A549 (cell line): ENCODE measurements at regions of chr7 and their contacts with region 1.

Region 1: DNA sequence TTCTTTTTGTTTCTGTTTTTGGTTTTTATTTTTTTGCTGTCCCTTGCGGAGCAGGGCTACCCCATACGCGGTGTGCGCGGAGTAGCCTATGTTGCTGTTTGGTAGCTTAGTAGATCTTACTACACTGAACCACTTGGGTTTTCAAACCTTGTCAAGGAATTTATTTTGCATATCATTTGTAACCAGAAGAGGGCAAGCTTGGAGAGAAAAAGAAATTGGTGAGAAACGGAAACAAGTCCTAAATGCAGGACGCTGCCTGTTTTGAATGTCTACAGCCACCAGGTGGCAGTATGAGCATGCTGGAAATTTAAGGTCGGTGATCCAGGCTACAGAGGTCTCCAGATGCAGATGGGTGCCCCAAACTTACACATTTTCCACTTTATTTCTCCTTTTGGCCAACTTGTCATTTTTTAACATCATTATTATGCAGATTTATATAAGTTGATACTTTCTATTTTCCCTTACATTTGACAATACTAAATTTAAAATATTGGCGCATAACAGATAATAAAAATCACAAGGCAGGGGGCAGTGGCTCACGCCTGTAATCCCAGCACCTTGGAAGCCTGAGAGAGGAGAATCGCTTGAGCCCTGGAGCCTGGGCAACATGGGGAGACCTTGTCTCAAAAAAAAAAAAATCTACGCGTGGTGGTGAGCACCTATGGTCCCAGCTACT is 15.3 kb upstream of the TRA2A start:
- DNase-seq: peak; percentile 86 to 93
- ATAC-seq: peak; percentile 92 to 94
- H3K4me3 ChIP-seq: no peak overlapping the region
- H3K27ac ChIP-seq: 0 out of 6 replicates have a peak overlapping the region, but pooled peaks of 1 of the 2 experiments have one; percentile 13
- H3K4me1 ChIP-seq: no peaks in the 10 kb centered on the region
- CTCF ChIP-seq: peak; percentile 99
- EP300 ChIP-seq: no peak
- POLR2A ChIP-seq: no peak
- RAD21 ChIP-seq: peak; percentile 92

Region 2: GRCh38 chr7:23261843-23262452 is 285.1 kb before region 1 on chr7:
- CTCF ChIA-PET with region 1: interaction called, 21 read pairs
- POLR2A ChIA-PET with region 1: no interaction called
- DNase-seq: peak; percentile 76 to 90
- ATAC-seq: peak; percentile 98 to 99
- H3K4me3 ChIP-seq: no peak overlapping the region
- H3K27ac ChIP-seq: no peak overlapping the region
- H3K4me1 ChIP-seq: no peaks in the 10 kb centered on the region
- CTCF ChIP-seq: peak; percentile 90
- EP300 ChIP-seq: no peak
- POLR2A ChIP-seq: no peak
- RAD21 ChIP-seq: peak; percentile 80 to 89

Region 3: DNA sequence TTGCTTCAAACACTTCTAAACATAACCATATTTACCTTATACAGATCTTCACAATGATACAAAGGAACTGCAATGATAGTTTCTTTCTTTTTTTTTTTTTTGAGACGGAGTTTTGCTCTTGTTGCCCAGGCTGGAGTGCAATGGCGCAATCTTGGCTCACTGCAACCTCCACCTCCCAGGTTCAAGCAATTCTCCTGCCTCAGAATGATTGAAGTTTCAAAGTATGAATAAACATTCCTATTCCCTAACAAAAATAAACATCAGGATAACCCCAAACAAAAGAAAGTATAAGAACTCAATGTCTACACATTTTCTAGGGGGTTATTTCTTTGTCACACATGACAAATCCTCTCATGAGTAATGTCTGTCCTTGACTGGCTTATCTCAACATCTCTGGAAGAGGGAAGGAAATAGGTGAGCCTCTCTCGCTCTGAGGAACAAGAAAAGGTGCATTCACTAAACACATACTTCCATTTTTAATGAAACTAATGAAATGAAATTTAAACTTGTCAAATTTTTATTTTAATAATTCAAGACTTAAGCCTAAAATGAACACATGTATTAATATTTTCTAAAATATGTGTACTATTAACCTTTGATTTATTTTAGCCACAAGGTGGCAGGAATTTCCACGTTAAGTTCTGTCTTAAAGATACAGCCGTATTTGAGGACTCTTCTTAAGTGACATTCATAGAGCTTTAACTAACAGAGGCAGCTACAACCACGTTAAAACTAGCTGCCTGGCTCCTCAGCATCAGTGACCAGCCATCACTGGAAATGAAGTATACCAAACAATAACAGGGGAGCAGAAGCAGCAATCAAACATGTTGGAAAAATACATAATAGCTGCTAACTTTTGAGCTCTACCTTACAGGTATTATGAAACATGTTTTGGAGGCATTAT is 189.6 kb before region 1 on chr7:
- CTCF ChIA-PET with region 1: interaction called, 18 read pairs
- POLR2A ChIA-PET with region 1: no interaction called
- DNase-seq: peak; percentile 86 to 87
- ATAC-seq: peak; percentile 91 to 96
- H3K4me3 ChIP-seq: no peak overlapping the region
- H3K27ac ChIP-seq: peak overlapping the region; percentile 62
- H3K4me1 ChIP-seq: peaks cover 37% of the 10 kb centered on the region
- CTCF ChIP-seq: peak; percentile 78
- EP300 ChIP-seq: peak; percentile 57 to 67; a peak in 3 of 5 replicates
- POLR2A ChIP-seq: no peak
- RAD21 ChIP-seq: peak; percentile 62 to 85

Region 4: DNA sequence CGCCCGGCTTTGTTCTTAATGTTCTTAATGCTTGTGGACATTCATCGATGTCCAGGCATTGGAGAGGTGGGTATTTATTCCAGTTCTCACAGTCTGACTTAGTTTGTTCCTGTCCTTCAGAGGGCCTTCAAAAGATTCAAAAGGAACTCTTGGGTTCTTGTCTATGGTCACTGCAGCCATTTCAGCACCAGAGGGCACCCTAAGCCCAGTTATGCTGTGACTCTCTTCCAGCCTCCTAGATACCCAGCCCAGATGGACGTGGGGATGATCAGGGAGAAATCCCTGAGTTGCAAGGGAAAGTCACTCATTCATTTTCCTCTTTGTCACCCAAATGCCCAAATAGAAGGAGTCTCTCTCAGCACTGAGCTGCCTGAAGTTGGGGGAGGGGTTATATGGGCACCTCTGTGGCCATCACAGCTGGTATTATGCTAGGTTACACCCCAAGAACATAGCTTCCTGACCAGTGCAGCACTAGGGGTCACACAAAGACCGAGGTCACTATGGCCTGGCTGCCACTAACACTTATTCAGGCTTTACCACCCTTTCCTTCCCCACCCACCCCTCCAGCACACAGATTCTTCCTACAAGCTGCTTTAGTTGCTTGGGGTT is 23.7 kb after region 1 on chr7:
- CTCF ChIA-PET with region 1: interaction called, 10 read pairs
- POLR2A ChIA-PET with region 1: no interaction called
- DNase-seq: peak; percentile 67 to 74
- ATAC-seq: peak; percentile 97 to 99
- H3K4me3 ChIP-seq: no peak overlapping the region
- H3K27ac ChIP-seq: no peak overlapping the region
- H3K4me1 ChIP-seq: no peaks in the 10 kb centered on the region
- CTCF ChIP-seq: peak; percentile 94
- EP300 ChIP-seq: no peak
- POLR2A ChIP-seq: no peak
- RAD21 ChIP-seq: peak; percentile 96 to 98

Region 5: DNA sequence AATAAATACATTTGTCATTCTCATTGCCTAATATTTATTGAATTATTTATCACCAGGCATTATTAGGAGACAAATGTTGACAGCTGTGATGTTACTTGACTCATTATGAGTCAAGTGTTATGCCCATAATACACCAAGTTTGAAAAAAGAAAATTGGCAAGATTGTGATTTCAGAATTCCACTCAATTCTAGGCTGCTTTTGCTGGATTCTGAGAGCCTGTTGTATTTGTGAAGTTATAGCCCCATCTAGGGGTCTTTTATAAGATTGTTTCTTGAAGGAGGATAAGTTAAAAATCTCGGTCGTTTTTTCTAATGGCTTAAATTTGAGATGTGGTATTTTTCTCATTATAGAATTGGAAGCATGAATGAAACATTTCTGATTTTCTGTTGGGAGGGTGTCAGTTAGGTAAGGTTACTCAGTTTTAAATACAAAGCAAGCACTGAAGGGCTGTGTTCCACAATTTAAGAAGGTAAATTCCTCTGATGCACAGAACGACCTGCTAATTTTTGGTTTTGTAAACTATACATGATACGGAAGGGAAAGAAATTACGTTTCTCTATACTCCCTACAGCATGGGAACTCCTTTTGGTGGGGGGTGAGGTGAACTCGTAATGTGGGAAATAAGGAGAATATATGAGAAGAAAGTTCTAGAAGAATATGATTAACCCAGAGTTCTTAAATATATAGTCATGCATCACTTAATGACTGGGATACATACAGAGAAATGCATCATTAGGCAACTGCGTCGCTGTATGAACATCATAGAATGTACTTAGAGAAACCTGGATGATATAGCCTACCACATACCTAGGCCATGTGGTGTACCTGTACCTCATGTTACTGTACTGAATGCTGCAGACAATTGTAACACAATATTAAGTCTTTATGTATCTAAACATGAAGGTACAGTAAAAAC is 165.6 kb after region 1 on chr7:
- CTCF ChIA-PET with region 1: interaction called, 51 read pairs
- POLR2A ChIA-PET with region 1: no interaction called
- DNase-seq: peak; percentile 54 to 64
- ATAC-seq: peak; percentile 61 to 83; a peak in 3 of 6 replicates
- H3K4me3 ChIP-seq: no peak overlapping the region
- H3K27ac ChIP-seq: no peak overlapping the region
- H3K4me1 ChIP-seq: peaks cover 27% of the 10 kb centered on the region
- CTCF ChIP-seq: peak; percentile 96
- EP300 ChIP-seq: no peak
- POLR2A ChIP-seq: no peak
- RAD21 ChIP-seq: peak; percentile 90 to 95